CD14-positive monocyte (primary cell): ENCODE measurements at regions of chr17 and their contacts with region 1.

Region 1: GRCh38 chr17:50148226-50149090 is 2.0 kb downstream of the PPP1R9B start:
- DNase-seq: peak; percentile 87 to 95 (median 89)
- H3K4me3 ChIP-seq: peak overlapping the region; percentile 83 to 100 (median 95)
- H3K4me3 Mint-ChIP-seq: peak overlapping the region; percentile 100
- H3K27ac ChIP-seq: peak overlapping the region; percentile 83 to 93
- H3K27ac Mint-ChIP-seq: peak overlapping the region; percentile 95 to 98 (median 96)
- H3K4me1 ChIP-seq: peaks cover 59 to 69% of the 10 kb centered on the region in 2 donors
- H3K4me1 Mint-ChIP-seq: peaks cover 55% of the 10 kb centered on the region
- H3K27me3 ChIP-seq: no peaks in the 10 kb centered on the region
- H3K27me3 Mint-ChIP-seq: peaks cover 0 to 2% (median 1%) of the 10 kb centered on the region in 3 donors
- CTCF ChIP-seq: no peak

Region 2: DNA sequence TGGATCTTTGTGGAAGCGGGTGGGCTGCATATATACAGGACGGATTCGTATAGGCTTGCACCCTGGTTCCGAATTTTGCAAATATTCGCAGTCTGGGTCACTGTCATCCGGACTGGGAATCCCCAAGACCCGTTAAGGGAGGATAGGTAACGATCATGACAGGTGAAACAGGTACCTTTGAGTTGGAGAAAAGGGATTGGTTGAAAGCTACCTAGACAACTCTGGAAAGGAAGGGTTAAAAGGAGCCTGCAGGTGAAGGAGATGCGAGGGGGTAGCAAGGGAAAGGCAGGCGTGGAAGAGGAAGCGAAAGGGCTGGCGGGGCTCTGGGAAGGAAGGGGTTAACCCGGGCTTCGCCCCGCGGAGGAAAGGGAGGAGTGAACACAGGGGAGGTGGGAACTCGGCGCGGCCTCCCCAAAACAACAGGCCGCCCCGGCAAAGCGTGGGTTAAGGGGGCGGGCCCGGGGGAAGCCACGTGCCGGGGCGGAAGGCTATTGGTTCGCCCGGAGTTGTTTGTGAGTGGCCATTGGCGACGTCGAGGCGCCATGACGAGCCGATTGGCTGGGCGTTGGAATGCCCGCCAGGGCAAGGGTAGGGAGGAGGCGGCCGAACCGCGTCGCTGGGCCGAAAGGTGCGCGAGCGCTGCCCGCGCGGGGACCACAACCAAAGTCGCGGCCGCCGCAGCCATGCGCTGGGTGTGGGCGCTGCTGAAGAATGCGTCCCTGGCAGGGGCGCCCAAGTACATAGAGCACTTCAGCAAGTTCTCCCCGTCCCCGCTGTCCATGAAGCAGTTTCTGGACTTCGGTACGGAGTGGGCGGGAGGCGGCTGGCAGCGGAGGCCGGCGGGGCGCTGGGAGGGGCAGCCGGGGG is 53.5 kb before region 1 on chr17 and contains the start of gene PDK2:
- intact Hi-C with region 1: loop called in 1 of 2 experiments (anchors 1 kb)
- DNase-seq: peak; percentile 93 to 94 (median 93)
- H3K4me3 ChIP-seq: peak within 1 kb of the TSS; percentile 80 to 89 (median 88)
- H3K4me3 Mint-ChIP-seq: peak within 1 kb of the TSS; percentile 93 to 99
- H3K27ac ChIP-seq: peak within 1 kb of the TSS; percentile 41 to 70
- H3K27ac Mint-ChIP-seq: peak within 1 kb of the TSS; percentile 82 to 93 (median 89)
- H3K4me1 ChIP-seq: peaks cover 16 to 23% of the 10 kb centered on the region in 2 donors
- H3K4me1 Mint-ChIP-seq: peaks cover 24% of the 10 kb centered on the region
- H3K27me3 ChIP-seq: no peaks in the 10 kb centered on the region
- H3K27me3 Mint-ChIP-seq: peaks cover 4 to 9% (median 4%) of the 10 kb centered on the region in 3 donors
- CTCF ChIP-seq: no peak
- polyA plus RNA-seq, gene PDK2: 15.9 to 43.0 (median 23.4) TPM

Region 3: GRCh38 chr17:50129728-50130558 is 18.5 kb before region 1 on chr17 and contains the start of gene SAMD14:
- intact Hi-C with region 1: no loop called
- DNase-seq: peak; percentile 26 to 85 (median 56)
- H3K4me3 ChIP-seq: peak within 1 kb of the TSS in 1 of 3 experiments; percentile 55
- H3K4me3 Mint-ChIP-seq: peak within 1 kb of the TSS; percentile 53 to 95
- H3K27ac ChIP-seq: no peak within 1 kb of the TSS
- H3K27ac Mint-ChIP-seq: peak within 1 kb of the TSS in 3 of 7 donors; percentile 71 to 85 (median 75)
- H3K4me1 ChIP-seq: peaks cover 24 to 36% of the 10 kb centered on the region in 2 donors
- H3K4me1 Mint-ChIP-seq: peaks cover 38% of the 10 kb centered on the region
- H3K27me3 ChIP-seq: peaks cover 32 to 53% of the 10 kb centered on the region in 2 donors
- H3K27me3 Mint-ChIP-seq: peaks cover 63 to 74% (median 69%) of the 10 kb centered on the region in 3 donors
- CTCF ChIP-seq: no peak
- polyA plus RNA-seq, gene SAMD14: 0.09 TPM in 1 of 3 donors, not detected in the others